ENCODE measurements at regions of chr20 and their contacts with region 1.

Region 1: DNA sequence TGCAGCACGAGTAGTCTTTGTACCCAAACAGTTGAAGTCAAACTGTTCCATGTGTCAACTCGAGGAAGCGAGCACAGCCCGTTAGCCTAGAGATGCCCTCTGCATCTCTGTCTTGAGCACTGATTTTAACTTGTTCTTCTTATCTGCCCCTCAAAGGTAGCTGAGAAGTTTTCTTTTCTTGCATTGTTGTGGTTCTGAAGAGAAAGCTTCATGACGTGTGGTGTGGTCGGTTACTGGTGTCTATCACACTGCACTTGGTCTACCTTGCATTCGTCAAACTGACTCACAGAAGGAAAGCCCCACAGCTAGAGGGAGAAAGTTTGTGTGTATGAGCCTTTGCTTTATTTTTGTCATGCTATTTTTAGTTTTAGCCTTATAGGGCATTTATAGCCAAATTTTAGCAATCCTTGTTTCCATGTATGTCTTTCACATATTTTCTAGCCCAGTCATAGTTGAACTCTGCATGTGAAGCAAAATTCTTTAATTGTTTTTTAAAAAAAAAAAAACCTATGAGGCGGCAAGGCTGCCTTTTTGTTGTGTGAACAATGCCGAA is 115.1 kb downstream of the JAG1 start:
- DNase-seq: peak; percentile 88
- H3K4me3 Mint-ChIP-seq: peak overlapping the region; percentile 52
- H3K27ac Mint-ChIP-seq: peak overlapping the region; percentile 36
- H3K4me1 Mint-ChIP-seq: peaks cover 28% of the 10 kb centered on the region
- H3K27me3 Mint-ChIP-seq: no peaks in the 10 kb centered on the region

Region 2: GRCh38 chr20:10521068-10521831 is 37.5 kb before region 1 on chr20:
- intact Hi-C with region 1: loop called (anchors 1 kb)
- DNase-seq: no peak
- H3K4me3 Mint-ChIP-seq: peak overlapping the region; percentile 3
- H3K27ac Mint-ChIP-seq: peak overlapping the region; percentile 72
- H3K4me1 Mint-ChIP-seq: peaks cover 25% of the 10 kb centered on the region
- H3K27me3 Mint-ChIP-seq: no peaks in the 10 kb centered on the region

Region 3: GRCh38 chr20:10596726-10597125 is 38.0 kb after region 1 on chr20:
- intact Hi-C with region 1: loop called (anchors 1 kb)
- DNase-seq: no peak
- H3K4me3 Mint-ChIP-seq: no peak overlapping the region
- H3K27ac Mint-ChIP-seq: no peak overlapping the region
- H3K4me1 Mint-ChIP-seq: peaks cover 15% of the 10 kb centered on the region
- H3K27me3 Mint-ChIP-seq: no peaks in the 10 kb centered on the region

Region 4: DNA sequence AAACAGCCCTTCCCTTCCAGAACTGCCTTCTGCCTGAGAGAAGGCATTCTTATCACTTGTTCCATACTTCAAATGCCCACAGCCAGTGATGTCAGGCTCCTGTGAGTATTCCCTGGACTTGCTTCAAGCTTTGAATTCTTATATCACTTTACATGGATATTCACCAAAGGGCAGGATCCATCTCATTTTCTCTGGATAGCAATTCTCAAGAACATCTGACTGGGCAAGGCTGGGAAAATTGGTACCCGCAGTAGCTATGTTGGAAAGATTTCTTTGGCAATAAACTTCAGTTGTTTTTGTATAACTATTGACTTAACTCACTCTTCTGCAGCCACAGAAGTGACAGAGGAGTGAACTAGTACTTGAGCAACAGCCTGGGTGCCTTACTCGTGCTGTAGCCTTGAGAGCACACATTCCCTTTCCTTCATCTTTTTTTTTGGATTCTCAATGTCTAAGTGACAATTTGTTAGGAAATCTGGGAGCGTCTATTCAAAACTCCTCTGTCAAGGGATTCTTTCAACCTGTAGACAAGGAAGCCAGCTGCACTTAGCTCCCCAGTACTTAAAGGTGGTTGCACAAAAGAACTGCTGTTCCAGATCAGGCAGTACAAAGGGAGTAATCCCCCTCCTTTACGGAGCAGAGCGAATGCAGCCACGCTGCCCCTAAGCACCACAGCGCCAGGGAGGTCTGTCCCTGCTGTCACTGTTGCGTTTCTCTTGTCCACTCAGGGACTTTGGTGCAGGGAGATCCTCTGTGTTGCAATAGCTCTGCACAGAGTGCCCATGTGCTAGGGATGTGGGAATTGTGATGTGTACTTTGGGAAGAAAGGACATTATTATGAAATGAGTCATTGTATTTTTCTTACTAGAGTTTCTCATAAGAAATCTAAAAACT is 45.5 kb after region 1 on chr20:
- intact Hi-C with region 1: loop called (anchors 1 kb)
- DNase-seq: no peak
- H3K4me3 Mint-ChIP-seq: no peak overlapping the region
- H3K27ac Mint-ChIP-seq: peak overlapping the region; percentile 36
- H3K4me1 Mint-ChIP-seq: peaks cover 14% of the 10 kb centered on the region
- H3K27me3 Mint-ChIP-seq: no peaks in the 10 kb centered on the region

Region 5: GRCh38 chr20:10673988-10674711 is 115.4 kb after region 1 on chr20 and contains the start of gene JAG1:
- intact Hi-C with region 1: loop called (anchors 1 kb)
- DNase-seq: peak; percentile 93
- H3K4me3 Mint-ChIP-seq: peak within 1 kb of the TSS; percentile 93
- H3K27ac Mint-ChIP-seq: peak within 1 kb of the TSS; percentile 88
- H3K4me1 Mint-ChIP-seq: peaks cover 30% of the 10 kb centered on the region
- H3K27me3 Mint-ChIP-seq: peaks cover 67% of the 10 kb centered on the region
- total RNA-seq, gene JAG1: 1.1 and 1.3 TPM in 2 replicates

Region 6: DNA sequence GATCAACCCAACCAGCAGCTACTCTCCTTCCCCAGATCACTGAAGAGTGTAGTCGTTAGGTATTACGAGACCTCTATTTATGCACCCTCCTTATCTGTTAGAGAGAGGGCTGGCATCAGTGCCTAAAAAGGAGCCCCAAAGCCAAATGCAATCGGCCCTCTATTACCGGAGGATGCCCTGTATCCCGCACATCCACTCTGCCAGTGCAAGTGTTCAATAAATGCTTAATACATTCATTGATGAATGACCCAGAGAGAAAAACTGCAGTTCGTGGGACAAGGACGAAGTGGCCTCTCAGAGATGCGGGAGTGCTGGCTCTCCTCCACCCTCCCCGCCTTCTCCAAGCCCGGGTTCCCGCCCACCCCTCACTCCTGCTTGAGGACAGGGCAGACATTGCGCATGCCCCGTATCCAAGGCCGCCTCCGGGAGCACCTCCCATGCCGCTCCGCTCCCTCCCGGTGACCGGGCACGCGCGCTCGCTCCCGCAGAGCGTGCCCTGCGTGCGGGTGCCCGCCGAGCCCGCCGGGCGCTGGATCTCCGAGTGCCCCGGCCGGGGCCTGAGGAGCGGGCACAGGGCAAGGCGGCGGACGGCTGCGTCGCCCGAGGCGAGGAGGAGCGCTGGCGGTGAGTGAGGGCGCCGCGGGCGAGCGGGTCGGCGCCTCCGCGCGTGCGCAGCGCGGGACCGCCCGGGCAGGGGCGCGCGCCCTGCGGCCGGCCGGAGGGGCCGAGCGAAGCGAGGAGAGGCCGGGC is 1331.8 kb after region 1 on chr20:
- intact Hi-C with region 1: loop called (anchors 5 kb)
- DNase-seq: peak; percentile 91
- H3K4me3 Mint-ChIP-seq: peak overlapping the region; percentile 78
- H3K27ac Mint-ChIP-seq: peak overlapping the region; percentile 66
- H3K4me1 Mint-ChIP-seq: peaks cover 16% of the 10 kb centered on the region
- H3K27me3 Mint-ChIP-seq: peaks cover 29% of the 10 kb centered on the region

Measured in activated CD4-positive, alpha-beta T cell treated with anti-CD3 and anti-CD28 coated beads, Interleukin-2, amount 10 ng/mL, durations not matched to agents 24 days and 14 days (primary cell).